IMR-90 (cell line): ENCODE measurements at regions of chr5 and their contacts with region 1.

Region 1: GRCh38 chr5:134184155-134185135 is 7.7 kb upstream of the SKP1 start:
- DNase-seq: peak; percentile 56
- ATAC-seq: peak; percentile 99
- H3K4me3 ChIP-seq: no peak overlapping the region
- H3K27ac ChIP-seq: no peak overlapping the region
- H3K4me1 ChIP-seq: no peaks in the 10 kb centered on the region
- H3K27me3 ChIP-seq: no peaks in the 10 kb centered on the region
- CTCF ChIP-seq: peak; percentile 89
- POLR2A ChIP-seq: no peak
- RAD21 ChIP-seq: peak; percentile 93

Region 2: DNA sequence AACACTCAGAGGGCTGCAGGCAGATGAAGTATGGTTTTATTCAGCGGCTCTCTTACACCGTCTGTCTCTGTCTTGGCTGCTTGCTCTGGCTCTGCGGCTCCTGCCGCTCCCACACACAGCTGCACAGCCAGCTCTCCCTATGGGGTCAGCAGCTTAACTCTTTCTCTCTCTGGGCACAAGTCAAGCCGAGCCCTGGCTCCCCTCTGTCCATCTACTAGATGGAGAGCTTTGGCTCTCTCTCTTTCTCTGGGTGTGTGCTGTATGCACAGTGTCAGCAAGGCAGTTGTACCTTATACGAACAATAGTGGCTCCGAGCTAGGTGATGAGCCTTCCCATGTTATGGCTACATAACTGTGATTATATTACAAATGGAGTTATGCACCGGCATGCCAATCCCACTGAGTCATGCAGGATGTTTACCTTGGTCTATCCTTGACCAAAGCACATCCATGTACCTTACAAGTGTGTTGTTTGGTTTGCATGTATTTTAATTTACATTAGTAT is 60.7 kb after region 1 on chr5:
- CTCF ChIA-PET with region 1: interaction called, 10 read pairs
- POLR2A ChIA-PET with region 1: no interaction called
- dilution Hi-C with region 1: no loop called
- in situ Hi-C with region 1: no loop called
- intact Hi-C with region 1: no loop called
- DNase-seq: peak; percentile 86
- ATAC-seq: peak; percentile 59
- H3K4me3 ChIP-seq: peak overlapping the region; percentile 27; the same call in 1 of the 2 replicates
- H3K27ac ChIP-seq: peak overlapping the region; percentile 76
- H3K4me1 ChIP-seq: peaks cover 25% of the 10 kb centered on the region
- H3K27me3 ChIP-seq: no peaks in the 10 kb centered on the region
- CTCF ChIP-seq: no peak
- POLR2A ChIP-seq: no peak
- RAD21 ChIP-seq: no peak

Region 3: DNA sequence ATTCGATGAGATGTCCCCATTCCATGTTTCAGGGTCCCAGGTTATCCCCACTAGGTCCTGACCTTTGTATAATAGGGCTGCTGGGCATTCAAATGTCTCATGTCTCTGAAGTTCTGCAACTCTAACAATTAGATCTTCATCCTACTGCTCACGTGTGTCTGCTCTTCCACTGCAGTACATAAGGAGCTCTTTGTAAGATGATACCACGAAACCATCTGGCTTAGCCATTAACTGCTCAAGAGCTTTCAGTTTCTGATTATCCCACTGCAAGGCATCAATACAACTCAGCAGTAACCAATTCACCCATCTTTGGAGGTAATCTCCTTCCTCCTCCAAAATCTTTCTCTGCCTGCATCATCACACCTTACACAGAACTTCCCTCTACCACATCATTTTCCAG is 91.4 kb after region 1 on chr5:
- CTCF ChIA-PET with region 1: no interaction called
- POLR2A ChIA-PET with region 1: no interaction called
- dilution Hi-C with region 1: no loop called
- in situ Hi-C with region 1: no loop called
- intact Hi-C with region 1: no loop called
- DNase-seq: peak; percentile 48
- ATAC-seq: peak; percentile 54; the same call in 1 of the 2 replicates
- H3K4me3 ChIP-seq: no peak overlapping the region
- H3K27ac ChIP-seq: no peak overlapping the region
- H3K4me1 ChIP-seq: no peaks in the 10 kb centered on the region
- H3K27me3 ChIP-seq: no peaks in the 10 kb centered on the region; the same call in 1 of the 2 replicates
- CTCF ChIP-seq: no peak
- POLR2A ChIP-seq: no peak
- RAD21 ChIP-seq: no peak